ENCODE measurements at regions of chr12 and their contacts with region 1.

Region 1: GRCh38 chr12:46401662-46402061 is 29.1 kb upstream of the SLC38A2 start:
- DNase-seq: peak in 1 of 2 donors; percentile 68
- H3K4me3 ChIP-seq: no peak overlapping the region
- H3K27ac ChIP-seq: peak overlapping the region; percentile 50 to 80
- H3K4me1 ChIP-seq: peaks cover 0 to 36% of the 10 kb centered on the region in 2 donors
- H3K27me3 ChIP-seq: no peaks in the 10 kb centered on the region
- CTCF ChIP-seq: peak in 2 of 3 experiments; percentile 31 to 35

Region 2: GRCh38 chr12:46459861-46460545 is 58.3 kb after region 1 on chr12:
- intact Hi-C with region 1: loop called (anchors 5 kb)
- DNase-seq: no peak
- H3K4me3 ChIP-seq: no peak overlapping the region
- H3K27ac ChIP-seq: peak overlapping the region; percentile 76 to 81
- H3K4me1 ChIP-seq: peaks cover 0 to 40% of the 10 kb centered on the region in 2 donors
- H3K27me3 ChIP-seq: no peaks in the 10 kb centered on the region
- CTCF ChIP-seq: no peak

Region 3: DNA sequence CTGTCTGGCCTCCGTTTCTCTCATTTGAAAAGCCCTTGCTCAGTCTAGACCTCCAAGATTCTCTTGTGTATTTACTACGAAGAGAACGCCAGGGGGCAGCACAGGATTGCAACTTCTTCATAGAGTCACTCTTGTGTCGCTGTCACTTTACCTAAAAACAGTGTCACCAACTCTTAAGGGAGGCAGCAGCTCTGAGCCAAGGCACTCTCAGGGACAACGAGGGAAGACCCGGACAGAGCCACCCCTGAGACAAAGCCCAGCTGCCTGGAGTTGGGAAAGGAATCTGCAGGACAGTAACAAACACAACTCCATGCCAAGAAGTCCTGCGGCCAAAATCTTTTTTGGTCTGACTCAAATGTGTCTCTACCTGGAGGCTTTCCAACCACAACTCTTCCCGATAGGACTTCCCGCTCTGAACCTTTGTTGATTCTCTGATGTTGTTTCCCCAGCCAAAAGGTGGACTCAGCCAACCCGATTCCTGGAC is 1313.8 kb after region 1 on chr12:
- intact Hi-C with region 1: no loop called
- DNase-seq: peak in 1 of 2 donors; percentile 89
- H3K4me3 ChIP-seq: peak overlapping the region in 1 of 2 donors; percentile 42
- H3K27ac ChIP-seq: peak overlapping the region; percentile 88 to 94
- H3K4me1 ChIP-seq: peaks cover 19 to 26% of the 10 kb centered on the region in 2 donors
- H3K27me3 ChIP-seq: no peaks in the 10 kb centered on the region
- CTCF ChIP-seq: peak; percentile 69 to 90 (median 80)